Heart left ventricle (tissue), 16 donors: ENCODE measurements at regions of chr16 and their contacts with region 1.

Region 1: GRCh38 chr16:58931436-58931835 is 197.3 kb upstream of the GOT2 start:
- DNase-seq: no peak
- ATAC-seq: no peak
- H3K4me3 ChIP-seq: no peak overlapping the region
- H3K27ac ChIP-seq: no peak overlapping the region
- H3K4me1 ChIP-seq: no peaks in the 10 kb centered on the region
- H3K27me3 ChIP-seq: no peaks in the 10 kb centered on the region
- CTCF ChIP-seq: no peak
- POLR2A ChIP-seq: no peak

Region 2: DNA sequence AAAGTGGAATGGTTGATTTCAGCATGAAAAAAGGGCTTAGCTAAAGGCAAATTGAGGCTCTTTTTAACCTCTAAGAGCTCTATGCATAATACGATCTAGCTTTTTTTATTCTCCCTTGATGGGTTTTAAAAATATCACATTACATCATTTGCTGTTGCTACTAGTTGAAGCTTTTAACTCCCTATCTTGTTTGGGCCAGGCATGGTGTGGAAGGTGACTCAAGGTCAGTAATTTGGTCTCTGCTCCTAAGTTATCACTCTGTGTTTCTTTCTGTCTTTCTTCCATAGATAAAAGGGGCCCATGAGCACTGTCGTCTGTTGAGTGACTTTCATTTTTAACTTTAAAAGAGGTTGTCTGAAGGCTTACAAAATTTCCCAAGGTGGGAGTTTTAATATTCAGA is 139.2 kb before region 1 on chr16:
- intact Hi-C with region 1: no loop called
- DNase-seq: no peak
- ATAC-seq: peak; percentile 69 to 83 (median 77)
- H3K4me3 ChIP-seq: no peak overlapping the region
- H3K27ac ChIP-seq: peak overlapping the region in 10 of 12 donors; percentile 12 to 73 (median 51)
- H3K4me1 ChIP-seq: peaks cover 0 to 18% (median 0%) of the 10 kb centered on the region in 12 donors
- H3K27me3 ChIP-seq: no peaks in the 10 kb centered on the region
- CTCF ChIP-seq: no peak
- POLR2A ChIP-seq: no peak

Region 3: GRCh38 chr16:58999762-59000161 is 68.3 kb after region 1 on chr16:
- intact Hi-C with region 1: loop called in 1 of 10 experiments (anchors 10 kb)
- DNase-seq: no peak
- ATAC-seq: no peak
- H3K4me3 ChIP-seq: no peak overlapping the region
- H3K27ac ChIP-seq: no peak overlapping the region
- H3K4me1 ChIP-seq: no peaks in the 10 kb centered on the region
- H3K27me3 ChIP-seq: no peaks in the 10 kb centered on the region
- CTCF ChIP-seq: no peak
- POLR2A ChIP-seq: no peak